Activated CD4-positive, alpha-beta memory T cell treated with anti-CD3 and anti-CD28 coated beads, Interleukin-2, amount 10 ng/mL, durations not matched to agents 7 days and 5 days (primary cell): ENCODE measurements at regions of chr1 and their contacts with region 1.

Region 1: GRCh38 chr1:93846211-93846991 is 32.6 kb downstream of the DNTTIP2 start:
- DNase-seq: peak; percentile 83
- H3K4me3 Mint-ChIP-seq: peak overlapping the region; percentile 87
- H3K27ac Mint-ChIP-seq: peak overlapping the region; percentile 87
- H3K4me1 Mint-ChIP-seq: peaks cover 33% of the 10 kb centered on the region
- H3K27me3 Mint-ChIP-seq: peaks cover 7% of the 10 kb centered on the region

Region 2: GRCh38 chr1:93345633-93346420 is 500.6 kb before region 1 on chr1 and contains the start of gene DR1:
- CTCF ChIA-PET with region 1: interaction called, 4 read pairs
- POLR2A ChIA-PET with region 1: interaction called, 24 read pairs
- DNase-seq: peak; percentile 92
- H3K4me3 Mint-ChIP-seq: peak within 1 kb of the TSS; percentile 99
- H3K27ac Mint-ChIP-seq: peak within 1 kb of the TSS; percentile 97
- H3K4me1 Mint-ChIP-seq: peaks cover 26% of the 10 kb centered on the region
- H3K27me3 Mint-ChIP-seq: no peaks in the 10 kb centered on the region
- total RNA-seq, gene DR1: 100 to 104 TPM

Region 3: GRCh38 chr1:93615582-93616150 is 230.7 kb before region 1 on chr1:
- CTCF ChIA-PET with region 1: interaction called, 10 read pairs
- POLR2A ChIA-PET with region 1: interaction called, 3 read pairs
- DNase-seq: peak; percentile 41
- H3K4me3 Mint-ChIP-seq: no peak overlapping the region
- H3K27ac Mint-ChIP-seq: peak overlapping the region; percentile 44
- H3K4me1 Mint-ChIP-seq: peaks cover 22% of the 10 kb centered on the region
- H3K27me3 Mint-ChIP-seq: peaks cover 34% of the 10 kb centered on the region

Region 4: DNA sequence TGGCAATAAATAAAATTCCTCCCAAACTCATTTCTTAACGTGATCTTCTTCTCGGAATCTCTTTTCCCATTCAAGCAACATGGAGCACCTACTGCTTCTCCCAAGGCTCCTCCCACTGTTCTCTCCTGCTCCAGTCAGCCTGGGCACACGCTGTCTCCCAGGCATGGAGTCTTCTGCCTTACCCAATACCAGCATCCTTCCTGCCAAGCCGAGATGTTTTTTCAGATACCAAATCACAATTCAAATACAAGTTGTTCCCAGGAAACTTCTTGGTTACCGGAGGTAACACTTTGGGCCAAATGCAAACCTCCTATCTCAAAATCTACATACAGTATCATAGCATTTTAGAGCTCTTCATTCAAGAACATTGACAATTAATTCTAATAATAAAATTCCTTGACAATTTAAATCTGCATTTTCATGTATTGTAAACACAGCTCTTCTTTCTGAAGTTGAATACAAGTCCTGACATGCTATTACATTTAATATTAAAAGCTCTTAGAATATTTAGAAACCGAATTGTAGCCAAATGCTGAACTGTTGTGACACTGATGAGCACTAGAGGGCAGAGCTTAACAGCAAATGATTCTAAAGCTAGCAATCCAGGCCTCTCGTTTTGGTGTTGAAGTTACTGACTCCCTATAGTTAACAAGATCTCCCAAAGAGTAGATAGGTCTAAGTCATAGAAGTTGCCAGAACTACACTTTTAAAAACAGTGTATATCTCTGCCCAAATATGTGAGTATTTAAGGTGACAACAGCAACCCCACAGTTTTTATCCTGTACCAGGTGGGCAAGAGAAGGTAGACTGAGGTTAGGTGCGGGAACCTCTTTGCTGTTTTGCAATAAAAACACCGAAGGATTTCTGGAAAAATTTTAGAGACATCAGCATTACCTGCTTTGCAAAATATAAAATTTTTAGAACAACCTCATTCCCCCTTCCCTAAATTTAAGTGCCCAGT is 217.0 kb before region 1 on chr1:
- CTCF ChIA-PET with region 1: interaction called, 118 read pairs
- POLR2A ChIA-PET with region 1: interaction called, 4 read pairs
- DNase-seq: peak; percentile 47
- H3K4me3 Mint-ChIP-seq: no peak overlapping the region
- H3K27ac Mint-ChIP-seq: no peak overlapping the region
- H3K4me1 Mint-ChIP-seq: peaks cover 11% of the 10 kb centered on the region
- H3K27me3 Mint-ChIP-seq: no peaks in the 10 kb centered on the region

Region 5: GRCh38 chr1:93814059-93814794 is 32.2 kb before region 1 on chr1:
- CTCF ChIA-PET with region 1: interaction called, 70 read pairs
- POLR2A ChIA-PET with region 1: interaction called, 19 read pairs
- DNase-seq: peak; percentile 63
- H3K4me3 Mint-ChIP-seq: no peak overlapping the region
- H3K27ac Mint-ChIP-seq: no peak overlapping the region
- H3K4me1 Mint-ChIP-seq: peaks cover 30% of the 10 kb centered on the region
- H3K27me3 Mint-ChIP-seq: peaks cover 2% of the 10 kb centered on the region

Region 6: GRCh38 chr1:93878889-93879586 is 32.6 kb after region 1 on chr1 and contains the start of gene DNTTIP2:
- CTCF ChIA-PET with region 1: interaction called, 14 read pairs
- POLR2A ChIA-PET with region 1: interaction called, 21 read pairs
- DNase-seq: peak; percentile 93
- H3K4me3 Mint-ChIP-seq: peak within 1 kb of the TSS; percentile 88
- H3K27ac Mint-ChIP-seq: peak within 1 kb of the TSS; percentile 90
- H3K4me1 Mint-ChIP-seq: peaks cover 52% of the 10 kb centered on the region
- H3K27me3 Mint-ChIP-seq: no peaks in the 10 kb centered on the region
- total RNA-seq, gene DNTTIP2: 65.2 to 66.6 TPM

Region 7: DNA sequence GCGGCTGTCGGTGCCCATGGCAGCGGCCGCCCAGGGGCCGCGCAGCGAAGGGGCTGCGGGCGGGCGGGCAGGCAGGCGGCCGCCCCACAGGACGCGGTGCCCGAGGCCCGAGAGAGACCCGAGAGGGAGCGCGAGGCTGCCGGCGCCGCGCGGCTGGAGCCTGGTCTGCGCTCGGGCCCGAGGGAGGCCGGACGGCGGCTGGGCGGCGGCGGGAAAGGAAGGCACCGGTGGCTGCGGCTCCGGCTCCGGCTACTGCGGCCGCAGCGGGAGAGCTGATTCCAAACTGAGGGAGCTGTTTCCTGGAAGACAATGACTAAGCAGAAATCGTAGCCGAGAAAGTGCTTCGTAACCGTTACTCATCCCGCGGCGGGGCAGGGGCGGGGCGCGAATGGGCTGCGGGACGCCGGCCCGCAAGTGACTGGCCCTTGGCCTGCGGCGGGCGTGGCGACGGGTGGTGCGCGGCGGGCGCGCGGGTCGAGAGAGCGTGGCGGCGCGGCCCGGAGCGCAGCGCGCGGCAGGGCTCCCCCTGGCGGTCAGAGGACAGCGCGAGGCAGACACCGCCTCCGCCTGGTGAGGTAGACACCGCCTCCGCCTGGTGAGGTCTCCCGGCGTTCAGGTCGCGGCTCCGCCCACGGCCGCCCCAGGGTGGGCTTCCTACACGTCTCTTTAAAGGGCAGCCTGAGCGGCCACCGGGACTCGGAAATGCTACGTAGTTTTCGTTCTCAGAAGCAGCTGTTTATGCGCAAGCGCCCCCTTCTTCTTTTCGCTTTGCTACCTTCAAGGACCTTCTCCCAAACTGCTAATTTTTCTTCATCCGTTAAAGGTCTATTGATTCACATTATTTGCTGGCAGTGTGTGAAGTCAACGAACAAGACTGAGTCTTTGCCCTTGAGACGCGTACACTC is 63.0 kb after region 1 on chr1 and contains the start of gene GCLM:
- CTCF ChIA-PET with region 1: interaction called, 13 read pairs
- POLR2A ChIA-PET with region 1: interaction called, 17 read pairs
- DNase-seq: peak; percentile 91
- H3K4me3 Mint-ChIP-seq: peak within 1 kb of the TSS; percentile 83
- H3K27ac Mint-ChIP-seq: peak within 1 kb of the TSS; percentile 86
- H3K4me1 Mint-ChIP-seq: peaks cover 37% of the 10 kb centered on the region
- H3K27me3 Mint-ChIP-seq: peaks cover 21% of the 10 kb centered on the region
- total RNA-seq, gene GCLM: 40.1 to 42.1 TPM

Region 8: DNA sequence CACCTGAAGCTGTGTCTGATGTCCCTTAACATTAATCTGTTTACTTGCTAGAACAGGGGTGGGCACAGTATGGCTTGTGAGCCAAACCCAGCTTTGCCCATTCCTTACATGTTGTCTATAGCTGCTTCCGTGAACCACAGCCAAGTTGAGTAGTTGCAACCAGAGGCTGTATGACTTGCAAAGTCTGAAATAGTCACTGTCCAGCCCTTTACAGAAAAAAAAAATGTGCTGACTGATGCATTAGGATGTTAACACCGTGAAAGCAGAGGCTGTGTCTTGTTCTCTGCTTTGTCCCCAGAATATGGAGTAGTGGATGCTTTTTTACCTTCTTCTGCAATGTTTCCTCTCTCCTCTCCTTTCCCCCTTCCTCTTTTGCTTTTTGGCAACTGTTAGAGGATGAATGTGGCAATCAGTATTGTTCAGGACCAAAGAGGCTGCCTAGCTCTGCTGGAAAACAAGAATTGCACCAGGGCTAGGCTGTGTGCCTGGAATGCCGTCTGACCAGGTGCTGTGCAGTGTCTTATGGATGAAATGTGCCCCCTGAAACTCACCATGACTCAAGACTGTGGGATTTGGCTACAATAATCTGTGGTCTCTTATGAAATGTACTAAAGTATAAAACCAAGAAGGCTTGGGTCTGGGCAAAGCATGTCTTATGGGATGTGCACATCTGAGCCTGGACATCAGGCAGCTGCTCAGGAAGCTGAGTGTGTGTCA is 142.4 kb after region 1 on chr1:
- CTCF ChIA-PET with region 1: no interaction called
- POLR2A ChIA-PET with region 1: no interaction called
- DNase-seq: no peak
- H3K4me3 Mint-ChIP-seq: no peak overlapping the region
- H3K27ac Mint-ChIP-seq: no peak overlapping the region
- H3K4me1 Mint-ChIP-seq: peaks cover 2% of the 10 kb centered on the region
- H3K27me3 Mint-ChIP-seq: peaks cover 37% of the 10 kb centered on the region